ENCODE measurements at regions of chr10 and their contacts with region 1.

Region 1: DNA sequence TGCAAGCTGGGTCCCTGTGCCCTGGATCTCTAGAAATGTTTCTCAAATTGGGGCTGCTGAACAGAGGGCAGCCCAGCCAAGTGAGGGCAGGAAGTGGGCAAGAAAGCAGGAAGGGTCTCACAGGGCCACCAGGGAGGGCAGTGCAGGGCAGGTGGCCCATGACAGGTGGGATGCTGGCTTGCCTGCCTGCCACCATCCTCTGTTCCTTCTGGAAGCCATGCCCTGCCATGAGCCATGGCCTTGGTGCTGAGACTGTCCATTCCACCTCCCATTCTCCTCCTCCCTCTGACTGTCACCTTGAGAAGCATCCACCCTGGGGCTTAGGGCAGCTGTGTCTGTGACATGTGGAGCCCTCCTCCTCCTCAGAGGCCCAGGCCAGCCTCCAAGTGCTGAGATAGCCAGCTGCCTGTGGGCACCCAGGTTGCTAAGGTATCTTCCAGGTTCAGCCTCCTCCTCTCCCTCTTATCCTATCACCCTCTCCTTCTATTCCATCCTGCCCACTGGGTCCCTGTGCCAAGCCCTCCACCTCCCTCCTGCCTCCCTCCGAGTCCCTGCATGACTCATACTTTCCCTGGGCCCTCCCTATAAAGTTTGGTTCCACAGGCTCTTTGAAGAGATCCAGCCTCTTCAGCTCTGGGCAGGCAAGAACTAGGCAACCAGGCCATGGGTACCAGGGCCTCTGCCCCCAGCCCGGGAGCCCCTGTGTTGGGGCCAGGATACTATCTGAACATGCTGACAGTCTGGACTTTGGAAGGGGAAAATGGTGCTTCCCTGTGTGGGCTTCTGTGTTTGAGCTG is 1.3 kb downstream of the VSIR start:
- DNase-seq: peak; percentile 82
- ATAC-seq: peak; percentile 71

Region 2: GRCh38 chr10:69974551-69975155 is 1797.4 kb before region 1 on chr10:
- intact Hi-C with region 1: no loop called
- DNase-seq: no peak
- ATAC-seq: no peak

Region 3: GRCh38 chr10:71719042-71719441 is 53.0 kb before region 1 on chr10:
- intact Hi-C with region 1: loop called (anchors 5 kb)
- DNase-seq: no peak
- ATAC-seq: peak; percentile 84